ENCODE measurements at regions of chr15 and their contacts with region 1.

Region 1: GRCh38 chr15:80411788-80412288 is 7.7 kb downstream of the ARNT2 start:
- DNase-seq: no peak
- H3K4me3 ChIP-seq: no peak overlapping the region
- H3K27ac ChIP-seq: no peak overlapping the region
- H3K4me1 ChIP-seq: no peaks in the 10 kb centered on the region
- H3K27me3 ChIP-seq: no peaks in the 10 kb centered on the region
- CTCF ChIP-seq: no peak
- EP300 ChIP-seq: no peak
- POLR2A ChIP-seq: no peak
- RAD21 ChIP-seq: no peak

Region 2: DNA sequence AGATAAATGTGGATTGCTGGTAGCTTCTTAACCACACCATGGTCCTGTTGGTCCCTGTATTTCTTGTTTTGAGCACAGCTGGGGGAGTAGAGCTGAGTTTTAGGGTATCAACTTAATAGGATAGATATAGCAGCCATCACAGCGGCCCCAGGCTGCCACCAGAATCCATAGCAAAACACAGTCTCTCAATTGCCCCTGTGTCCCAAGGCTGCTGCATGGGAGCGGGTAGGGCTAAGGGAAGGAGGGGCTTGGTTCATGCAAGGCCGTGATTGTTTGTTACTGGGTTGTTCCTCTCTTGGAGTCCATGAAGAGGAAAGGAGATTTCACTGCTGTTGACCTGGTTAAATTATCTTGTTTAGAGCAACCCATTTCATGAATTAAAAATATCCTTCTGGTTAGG is 14.5 kb after region 1 on chr15:
- CTCF ChIA-PET with region 1: interaction called, 42 read pairs
- POLR2A ChIA-PET with region 1: no interaction called
- DNase-seq: no peak
- H3K4me3 ChIP-seq: no peak overlapping the region
- H3K27ac ChIP-seq: no peak overlapping the region
- H3K4me1 ChIP-seq: no peaks in the 10 kb centered on the region; a peak in 1 of 7 replicates
- H3K27me3 ChIP-seq: no peaks in the 10 kb centered on the region
- CTCF ChIP-seq: no peak
- EP300 ChIP-seq: no peak
- POLR2A ChIP-seq: no peak
- RAD21 ChIP-seq: no peak

Region 3: DNA sequence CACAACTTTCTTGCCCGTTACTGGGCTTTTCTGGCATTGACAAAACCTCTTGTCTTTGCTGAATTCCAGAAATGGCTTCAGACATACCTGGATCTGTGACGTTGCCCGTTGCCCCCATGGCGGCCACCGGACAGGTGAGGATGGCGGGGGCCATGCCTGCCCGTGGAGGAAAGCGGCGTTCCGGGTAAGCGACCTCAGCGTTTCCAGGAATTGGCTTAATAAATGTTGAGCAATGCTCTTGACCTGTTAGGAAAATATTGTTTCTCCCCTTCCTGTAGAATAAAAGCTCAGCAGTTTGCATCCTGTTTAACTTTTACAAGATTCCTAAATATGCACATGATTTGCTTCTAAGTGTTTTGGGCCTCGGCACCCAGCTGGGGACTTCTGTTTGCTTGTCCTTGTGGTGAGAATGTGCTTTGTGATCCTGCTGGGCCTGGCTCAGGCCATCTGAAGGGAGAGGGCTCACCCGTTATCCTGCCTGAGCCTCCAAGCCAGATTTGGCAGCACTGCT is 39.0 kb after region 1 on chr15:
- CTCF ChIA-PET with region 1: no interaction called
- POLR2A ChIA-PET with region 1: no interaction called
- DNase-seq: no peak
- H3K4me3 ChIP-seq: no peak overlapping the region
- H3K27ac ChIP-seq: no peak overlapping the region
- H3K4me1 ChIP-seq: peaks cover 0 to 9% (median 6%) of the 10 kb centered on the region in 4 experiments; a peak in 5 of 7 replicates
- H3K27me3 ChIP-seq: no peaks in the 10 kb centered on the region
- CTCF ChIP-seq: no peak
- EP300 ChIP-seq: no peak
- POLR2A ChIP-seq: no peak
- RAD21 ChIP-seq: no peak

Measured in H1 (cell line).